Panc1 (cell line): ENCODE measurements at regions of chr22 and their contacts with region 1.

Region 1: DNA sequence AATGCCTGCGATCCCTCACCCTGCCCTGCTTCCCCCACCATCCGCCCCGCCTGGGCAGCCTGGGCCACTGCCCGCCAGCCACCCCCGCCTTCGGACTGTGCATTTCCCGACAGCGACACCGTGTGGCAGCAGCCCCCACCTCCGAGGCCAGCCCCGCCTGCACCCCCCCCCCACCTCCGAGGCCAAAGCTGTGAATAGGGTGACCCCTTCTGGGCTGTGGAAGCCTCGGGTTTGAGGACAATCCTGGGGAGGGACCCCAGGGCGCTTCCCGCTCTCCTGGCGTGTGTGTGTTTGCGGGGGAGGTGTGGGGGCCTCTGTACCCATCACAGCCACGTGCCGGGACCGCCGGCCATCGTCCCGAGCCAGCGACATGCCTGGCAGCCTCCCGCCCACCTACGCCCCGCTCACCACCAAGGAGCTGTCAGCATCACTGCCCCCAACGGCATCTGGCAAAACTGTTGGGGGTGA is 33.8 kb upstream of the PPARA start:
- DNase-seq: no peak
- ATAC-seq: peak; percentile 63
- H3K4me3 ChIP-seq: no peak overlapping the region
- H3K27ac ChIP-seq: peak overlapping the region; percentile 57
- H3K4me1 ChIP-seq: peaks cover 66% of the 10 kb centered on the region
- H3K27me3 ChIP-seq: no peaks in the 10 kb centered on the region
- CTCF ChIP-seq: peak; percentile 93

Region 2: DNA sequence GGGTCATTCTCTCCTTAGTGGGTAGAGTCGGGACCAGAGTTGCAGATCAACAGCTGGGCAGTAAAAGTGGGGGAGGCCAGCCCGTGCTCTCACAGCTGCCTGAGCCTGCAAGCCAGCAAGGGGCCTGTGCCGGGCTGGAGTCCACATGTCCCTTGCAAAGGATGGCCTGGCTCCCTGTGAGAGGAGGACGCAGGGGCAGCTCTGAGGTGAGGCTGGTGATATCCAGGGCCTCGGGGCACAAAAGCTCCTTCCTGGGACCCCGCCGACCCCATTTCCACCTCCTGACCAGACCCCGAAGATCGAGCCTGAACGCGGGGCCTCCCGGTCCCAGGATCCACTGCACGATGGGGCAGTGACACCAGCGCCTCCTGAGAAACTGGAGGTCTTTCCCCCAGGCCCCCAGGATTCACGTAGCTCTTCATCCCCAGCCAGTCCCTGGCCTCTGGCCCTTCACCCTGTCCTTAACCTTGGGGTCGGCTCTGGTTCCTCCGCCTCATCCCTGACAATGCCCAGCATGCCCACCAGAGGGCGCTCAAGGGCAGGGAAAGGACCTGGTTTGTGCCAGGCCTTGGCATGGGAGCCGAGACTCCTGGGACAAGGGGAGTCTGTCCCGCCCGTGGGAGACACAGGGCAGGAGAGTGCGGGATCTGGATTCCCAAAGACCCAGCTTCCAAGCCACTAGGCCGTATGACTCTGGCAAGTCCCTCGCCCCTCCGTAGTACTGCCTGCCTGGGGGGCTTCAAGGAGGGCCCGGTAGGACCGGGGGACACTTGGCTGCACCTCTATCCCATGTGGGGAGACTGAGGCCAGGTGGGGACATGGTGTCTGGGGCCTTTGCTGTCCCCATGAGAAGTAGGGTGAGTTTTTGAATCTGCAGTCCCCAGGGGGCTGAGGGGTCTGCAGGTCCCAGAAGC is 121.8 kb before region 1 on chr22:
- CTCF ChIA-PET with region 1: interaction called, 7 read pairs
- POLR2A ChIA-PET with region 1: no interaction called
- in situ Hi-C with region 1: no loop called
- intact Hi-C with region 1: loop called (anchors 10 kb)
- DNase-seq: no peak
- ATAC-seq: peak; percentile 88
- H3K4me3 ChIP-seq: no peak overlapping the region
- H3K27ac ChIP-seq: 0 out of 2 replicates have a peak overlapping the region, but pooled peaks have one; percentile 54
- H3K4me1 ChIP-seq: peaks cover 16% of the 10 kb centered on the region
- H3K27me3 ChIP-seq: no peaks in the 10 kb centered on the region
- CTCF ChIP-seq: peak; percentile 88

Region 3: GRCh38 chr22:46078241-46079092 is 38.1 kb before region 1 on chr22:
- CTCF ChIA-PET with region 1: interaction called, 3 read pairs
- POLR2A ChIA-PET with region 1: interaction called, 13 read pairs
- in situ Hi-C with region 1: no loop called
- intact Hi-C with region 1: no loop called
- DNase-seq: no peak
- ATAC-seq: peak; percentile 32
- H3K4me3 ChIP-seq: peak overlapping the region; percentile 83 to 90
- H3K27ac ChIP-seq: peak overlapping the region; percentile 99
- H3K4me1 ChIP-seq: peaks cover 27% of the 10 kb centered on the region
- H3K27me3 ChIP-seq: no peaks in the 10 kb centered on the region
- CTCF ChIP-seq: no peak

Region 4: GRCh38 chr22:46088541-46089311 is 27.8 kb before region 1 on chr22:
- CTCF ChIA-PET with region 1: interaction called, 13 read pairs
- POLR2A ChIA-PET with region 1: interaction called, 3 read pairs
- in situ Hi-C with region 1: no loop called
- intact Hi-C with region 1: no loop called
- DNase-seq: no peak
- ATAC-seq: no peak
- H3K4me3 ChIP-seq: peak overlapping the region; percentile 25 to 35
- H3K27ac ChIP-seq: peak overlapping the region; percentile 99
- H3K4me1 ChIP-seq: peaks cover 95% of the 10 kb centered on the region
- H3K27me3 ChIP-seq: no peaks in the 10 kb centered on the region
- CTCF ChIP-seq: no peak